OCI-LY7 (cell line): ENCODE measurements at regions of chr4 and their contacts with region 1.

Region 1: DNA sequence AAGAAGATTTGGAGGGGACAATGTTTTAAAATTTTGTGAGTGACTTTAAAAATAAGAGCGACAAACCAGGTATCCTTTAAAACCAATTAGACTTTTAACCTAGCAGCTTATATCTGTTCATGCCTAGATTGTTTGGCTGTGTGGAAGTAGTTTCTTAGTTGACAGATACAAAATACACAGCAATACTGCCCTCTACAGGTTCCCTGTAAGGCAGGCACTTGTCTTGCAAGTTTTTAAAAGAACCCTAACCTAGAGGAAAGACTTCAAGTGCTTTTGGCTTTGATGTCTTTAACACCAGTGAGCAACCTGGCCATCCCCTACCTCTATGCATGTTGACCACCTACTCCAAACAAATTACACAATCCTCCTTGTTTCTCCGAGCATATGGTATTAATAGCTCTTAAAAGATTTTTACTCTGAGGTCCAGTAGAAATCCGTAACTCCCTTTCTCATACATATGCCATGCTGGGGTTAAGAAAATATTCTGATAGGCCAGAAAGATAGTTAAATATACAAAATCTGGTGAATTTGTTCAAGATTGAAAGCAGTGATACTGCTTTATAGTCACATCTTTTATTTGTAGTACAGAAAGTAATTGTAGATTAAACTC is 273.0 kb downstream of the ARHGAP24 start:
- DNase-seq: peak; percentile 92
- H3K4me3 ChIP-seq: no peak overlapping the region
- H3K27ac ChIP-seq: no peak overlapping the region
- H3K4me1 ChIP-seq: peaks cover 32% of the 10 kb centered on the region
- CTCF ChIP-seq: peak; percentile 98

Region 2: GRCh38 chr4:85228264-85228663 is 519.7 kb before region 1 on chr4:
- CTCF ChIA-PET with region 1: interaction called, 3 read pairs
- POLR2A ChIA-PET with region 1: no interaction called
- intact Hi-C with region 1: loop called (anchors 5 kb)
- DNase-seq: peak; percentile 13
- H3K4me3 ChIP-seq: no peak overlapping the region
- H3K27ac ChIP-seq: no peak overlapping the region
- H3K4me1 ChIP-seq: no peaks in the 10 kb centered on the region
- CTCF ChIP-seq: peak; percentile 71

Region 3: GRCh38 chr4:85419103-85419502 is 328.9 kb before region 1 on chr4:
- CTCF ChIA-PET with region 1: no interaction called
- POLR2A ChIA-PET with region 1: no interaction called
- intact Hi-C with region 1: loop called (anchors 5 kb)
- DNase-seq: no peak
- H3K4me3 ChIP-seq: no peak overlapping the region
- H3K27ac ChIP-seq: no peak overlapping the region
- H3K4me1 ChIP-seq: no peaks in the 10 kb centered on the region
- CTCF ChIP-seq: no peak

Region 4: GRCh38 chr4:85474818-85475630 is 273.0 kb before region 1 on chr4 and contains the start of gene ARHGAP24:
- CTCF ChIA-PET with region 1: no interaction called
- POLR2A ChIA-PET with region 1: interaction called, 4 read pairs
- intact Hi-C with region 1: loop called (anchors 2 kb)
- DNase-seq: peak; percentile 32
- H3K4me3 ChIP-seq: peak within 1 kb of the TSS; percentile 60
- H3K27ac ChIP-seq: no peak within 1 kb of the TSS
- H3K4me1 ChIP-seq: no peaks in the 10 kb centered on the region
- CTCF ChIP-seq: no peak
- total RNA-seq, gene ARHGAP24: 0.75 and 0.88 TPM in 2 replicates

Region 5: DNA sequence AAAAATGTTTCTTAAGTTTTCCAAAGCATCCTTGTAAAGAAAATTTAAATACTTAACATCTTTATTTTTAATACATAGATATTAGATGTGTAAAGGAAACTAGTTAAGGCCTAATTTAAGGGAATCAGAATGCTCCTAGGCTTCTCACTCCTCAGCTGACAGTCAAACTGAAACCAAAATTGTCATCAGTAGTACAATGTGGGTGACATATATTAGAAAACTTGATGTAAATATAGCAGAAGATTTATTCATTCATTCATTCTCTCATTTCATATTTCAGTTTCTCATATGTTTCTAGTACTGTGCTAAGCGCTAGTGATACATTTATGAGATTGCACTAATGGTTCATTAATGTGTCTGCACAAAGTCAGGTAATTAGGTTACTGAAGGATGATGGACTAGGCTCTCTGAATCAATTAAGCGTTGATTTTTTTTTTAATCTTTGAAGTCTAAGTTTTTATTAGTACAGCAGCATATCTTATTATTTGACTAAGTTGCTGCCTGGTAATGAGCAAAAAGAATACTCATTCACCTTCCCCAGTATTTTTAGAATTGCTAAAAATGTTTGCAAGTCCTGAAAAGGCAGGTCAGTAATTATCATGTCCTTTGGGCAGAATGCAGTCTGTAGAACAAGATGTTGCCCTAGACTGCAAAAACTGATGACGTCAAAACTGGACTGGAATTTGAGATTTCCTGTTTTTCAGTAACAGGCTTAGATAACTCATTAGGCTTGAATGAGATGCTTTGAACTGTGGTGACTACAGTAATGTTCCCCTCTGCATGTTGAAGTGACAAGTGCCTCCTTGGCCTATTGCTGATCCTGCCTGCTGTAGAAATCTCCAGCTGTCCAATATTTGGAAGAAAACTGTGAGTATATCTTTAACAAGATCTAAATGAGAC is 144.3 kb before region 1 on chr4:
- CTCF ChIA-PET with region 1: no interaction called
- POLR2A ChIA-PET with region 1: interaction called, 11 read pairs
- intact Hi-C with region 1: loop called (anchors 5 kb)
- DNase-seq: peak; percentile 12
- H3K4me3 ChIP-seq: no peak overlapping the region
- H3K27ac ChIP-seq: no peak overlapping the region
- H3K4me1 ChIP-seq: peaks cover 8% of the 10 kb centered on the region
- CTCF ChIP-seq: no peak

Region 6: DNA sequence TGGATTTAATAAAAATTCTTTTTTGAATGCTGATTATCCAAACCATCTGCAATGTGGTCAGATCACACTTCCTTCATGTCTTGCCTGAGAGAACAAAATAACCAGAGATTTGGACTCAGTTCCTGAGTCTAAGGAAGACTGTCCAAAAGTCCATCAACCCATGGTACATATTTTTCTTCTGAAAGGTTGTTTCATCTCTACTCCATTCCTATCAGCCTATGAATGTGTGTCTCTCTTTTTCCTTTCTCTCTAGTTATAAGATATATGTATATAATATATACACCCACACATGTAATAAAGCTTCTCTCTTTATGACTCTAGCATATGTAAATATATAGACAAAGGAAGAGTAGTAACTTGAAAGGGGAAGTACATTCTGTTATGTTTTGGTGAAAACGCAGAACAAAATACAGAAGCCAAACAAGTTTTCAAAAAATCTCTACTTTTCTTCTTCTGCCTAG is 46.1 kb before region 1 on chr4:
- CTCF ChIA-PET with region 1: interaction called, 5 read pairs
- POLR2A ChIA-PET with region 1: interaction called, 4 read pairs
- intact Hi-C with region 1: loop called (anchors 1 kb)
- DNase-seq: peak; percentile 89
- H3K4me3 ChIP-seq: peak overlapping the region; percentile 37
- H3K27ac ChIP-seq: peak overlapping the region; percentile 99
- H3K4me1 ChIP-seq: peaks cover 59% of the 10 kb centered on the region
- CTCF ChIP-seq: no peak